Dendritic cell treated with granulocyte-macrophage colony-stimulating factor and Interleukin-4, amounts not matched to agents 40 ng/mL and 50 ng/mL, for 4 days (primary cell): ENCODE measurements at regions of chr14 and their contacts with region 1.

Region 1: GRCh38 chr14:35404449-35405303 is at the start of gene NFKBIA:
- H3K4me3 Mint-ChIP-seq: peak within 1 kb of the TSS; percentile 99
- H3K27ac Mint-ChIP-seq: peak within 1 kb of the TSS; percentile 100
- H3K4me1 Mint-ChIP-seq: peaks cover 29% of the 10 kb centered on the region
- H3K27me3 Mint-ChIP-seq: no peaks in the 10 kb centered on the region

Region 2: DNA sequence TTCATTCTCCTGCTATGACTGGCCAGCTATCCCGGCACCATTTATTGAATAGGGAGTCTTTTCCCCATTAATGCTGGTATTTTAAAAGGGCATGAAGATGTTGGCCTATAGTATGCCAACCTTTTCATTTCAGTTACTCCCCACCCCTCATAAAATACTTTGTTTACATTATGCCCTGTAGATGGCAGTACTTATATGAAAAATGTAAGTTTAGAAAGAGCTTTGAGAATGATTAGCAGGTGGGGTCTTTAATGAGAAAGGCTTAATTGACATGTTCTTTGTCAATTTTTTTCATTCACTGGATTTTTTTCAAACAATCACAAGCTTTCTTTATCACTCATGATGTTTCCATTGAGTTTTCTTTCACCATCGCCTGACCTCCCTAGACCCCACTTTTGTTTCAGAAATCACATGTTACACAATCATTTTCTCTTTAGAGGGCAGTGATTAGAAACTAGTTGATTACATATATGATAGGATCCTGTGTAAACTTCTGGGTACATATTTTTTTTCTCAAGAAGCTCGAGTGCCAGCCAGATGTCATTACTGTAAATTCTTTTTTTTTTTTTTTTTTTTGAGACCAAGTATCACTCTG is 175.1 kb before region 1 on chr14:
- intact Hi-C with region 1: loop called (anchors 1 kb)
- H3K4me3 Mint-ChIP-seq: no peak overlapping the region
- H3K27ac Mint-ChIP-seq: no peak overlapping the region
- H3K4me1 Mint-ChIP-seq: peaks cover 46% of the 10 kb centered on the region
- H3K27me3 Mint-ChIP-seq: no peaks in the 10 kb centered on the region

Region 3: DNA sequence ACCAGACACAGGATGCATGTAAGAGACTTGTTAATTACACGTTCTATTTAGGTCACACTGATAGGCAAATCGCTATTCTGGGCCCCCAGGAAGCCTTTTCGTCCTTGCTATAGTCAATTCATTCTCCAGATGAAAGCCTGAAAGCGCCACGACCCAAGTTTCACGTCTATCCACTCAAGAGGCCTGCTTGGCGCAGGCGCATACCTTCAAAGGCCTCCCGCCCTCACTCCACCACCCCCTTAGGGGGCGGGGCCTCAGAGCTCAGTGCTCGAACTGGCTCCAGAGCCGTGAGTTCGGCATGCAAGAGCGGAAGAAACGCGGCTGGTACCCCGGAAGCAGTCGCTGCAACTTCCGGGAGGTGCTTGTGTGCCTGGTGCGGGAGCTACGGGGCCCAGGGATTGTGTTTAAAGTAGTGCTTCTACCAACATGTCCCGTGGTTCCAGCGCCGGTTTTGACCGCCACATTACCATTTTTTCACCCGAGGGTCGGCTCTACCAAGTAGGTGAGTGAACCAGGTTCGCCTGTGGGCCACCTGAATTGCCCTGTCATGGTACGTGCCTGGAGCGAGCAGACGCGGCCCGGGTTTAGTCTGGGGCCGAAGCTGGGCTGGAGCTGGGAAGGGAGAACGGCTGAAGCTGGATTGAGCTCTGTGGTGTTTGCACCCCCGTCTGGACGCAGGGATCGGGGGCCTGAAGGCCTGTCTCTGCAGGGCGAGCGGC is 112.5 kb before region 1 on chr14 and contains the start of gene PSMA6:
- intact Hi-C with region 1: loop called (anchors 2 kb)
- H3K4me3 Mint-ChIP-seq: peak within 1 kb of the TSS; percentile 98
- H3K27ac Mint-ChIP-seq: peak within 1 kb of the TSS; percentile 92
- H3K4me1 Mint-ChIP-seq: peaks cover 51% of the 10 kb centered on the region
- H3K27me3 Mint-ChIP-seq: no peaks in the 10 kb centered on the region

Region 4: GRCh38 chr14:35365130-35366055 is 39.3 kb before region 1 on chr14:
- intact Hi-C with region 1: loop called (anchors 1 kb)
- H3K4me3 Mint-ChIP-seq: peak overlapping the region; percentile 39
- H3K27ac Mint-ChIP-seq: peak overlapping the region; percentile 98
- H3K4me1 Mint-ChIP-seq: peaks cover 65% of the 10 kb centered on the region
- H3K27me3 Mint-ChIP-seq: no peaks in the 10 kb centered on the region

Region 5: GRCh38 chr14:35425850-35426249 is 21.2 kb after region 1 on chr14:
- intact Hi-C with region 1: no loop called
- H3K4me3 Mint-ChIP-seq: no peak overlapping the region
- H3K27ac Mint-ChIP-seq: no peak overlapping the region
- H3K4me1 Mint-ChIP-seq: peaks cover 7% of the 10 kb centered on the region
- H3K27me3 Mint-ChIP-seq: no peaks in the 10 kb centered on the region